Activated CD4-positive, alpha-beta memory T cell treated with anti-CD3 and anti-CD28 coated beads for 36 hours (primary cell): ENCODE measurements at regions of chr1 and their contacts with region 1.

Region 1: DNA sequence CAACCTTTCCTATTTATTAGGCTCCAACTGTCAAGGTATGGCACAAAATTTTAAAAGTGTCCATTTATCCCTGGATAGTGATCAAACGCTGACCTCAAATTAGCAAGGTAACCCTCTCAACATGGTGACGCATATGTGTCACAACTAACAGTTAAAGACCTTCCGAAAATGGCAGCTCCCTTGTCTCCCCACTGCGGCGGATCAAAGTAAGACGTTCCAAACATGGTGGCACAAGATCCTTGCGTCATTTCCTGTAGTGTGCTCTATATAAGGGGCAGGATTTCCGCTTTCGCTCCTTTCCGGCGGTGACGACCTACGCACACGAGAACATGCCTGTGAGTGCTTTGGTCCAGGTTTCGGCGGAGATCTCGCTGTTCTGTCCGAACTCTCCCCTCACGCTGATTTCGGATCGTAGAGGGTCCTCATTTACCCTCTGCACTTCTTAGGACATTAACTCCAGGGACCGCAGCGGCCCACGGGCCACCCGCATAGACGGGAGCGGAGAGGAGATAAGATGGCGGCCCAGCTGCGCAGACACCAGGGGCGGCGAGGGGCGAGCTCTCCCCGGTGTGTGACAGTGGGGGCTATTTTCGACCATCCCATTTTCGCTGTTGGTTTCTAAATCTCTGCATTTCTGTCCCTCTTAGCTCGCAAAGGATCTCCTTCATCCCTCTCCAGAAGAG is at the start of gene RPS27:
- DNase-seq: peak; percentile 93
- H3K4me3 Mint-ChIP-seq: peak within 1 kb of the TSS; percentile 97
- H3K27ac Mint-ChIP-seq: peak within 1 kb of the TSS; percentile 99
- H3K4me1 Mint-ChIP-seq: peaks cover 45% of the 10 kb centered on the region
- H3K27me3 Mint-ChIP-seq: peaks cover 3% of the 10 kb centered on the region
- total RNA-seq, gene RPS27: 1,861 to 1,992 TPM

Region 2: DNA sequence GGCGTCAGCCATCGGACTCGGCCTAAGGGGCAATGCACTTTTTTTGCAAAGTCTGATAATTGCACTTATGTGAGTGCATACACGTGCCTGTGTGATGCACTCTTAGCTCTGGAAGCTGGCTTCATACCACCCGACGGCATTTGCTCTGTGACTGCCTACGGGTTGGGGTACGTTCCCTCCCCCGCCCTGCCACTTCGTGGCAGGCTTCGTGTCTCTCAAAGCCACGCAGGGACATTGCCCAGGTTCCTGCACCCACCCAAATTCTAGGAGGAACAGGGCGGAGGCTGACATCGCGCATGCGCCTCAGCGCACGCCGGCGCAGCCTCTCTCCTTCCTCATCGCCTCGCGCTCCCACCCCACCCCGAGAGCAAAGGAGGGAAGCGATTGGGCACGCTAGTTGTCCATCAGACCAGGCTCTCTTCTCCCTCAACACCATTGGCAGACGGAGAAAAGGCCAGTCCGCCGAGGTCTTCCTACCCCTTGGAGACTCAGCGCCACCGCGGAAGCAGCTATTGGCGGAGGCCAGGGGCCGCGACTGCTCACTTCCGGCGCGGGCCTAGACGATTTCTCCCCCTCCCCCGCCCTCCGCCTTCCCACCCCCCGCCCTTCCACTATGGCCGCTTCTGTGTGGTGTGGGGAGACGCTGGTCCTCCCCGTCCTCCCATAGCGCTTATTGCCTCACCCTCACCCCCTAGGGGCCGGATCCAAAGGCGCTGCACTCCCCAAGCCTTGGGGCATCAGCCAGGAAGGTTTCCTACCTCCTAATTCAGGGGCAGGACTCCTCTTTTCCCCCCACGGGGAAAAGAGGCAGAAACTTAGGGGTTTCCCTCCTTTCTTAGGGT is 262.9 kb before region 1 on chr1 and contains the start of gene INTS3:
- CTCF ChIA-PET with region 1: no interaction called
- POLR2A ChIA-PET with region 1: interaction called, 3 read pairs
- intact Hi-C with region 1: loop called (anchors 1 kb)
- DNase-seq: peak; percentile 100
- H3K4me3 Mint-ChIP-seq: peak within 1 kb of the TSS; percentile 95
- H3K27ac Mint-ChIP-seq: peak within 1 kb of the TSS; percentile 97
- H3K4me1 Mint-ChIP-seq: peaks cover 39% of the 10 kb centered on the region
- H3K27me3 Mint-ChIP-seq: no peaks in the 10 kb centered on the region
- total RNA-seq, gene INTS3: 45.5 to 47.7 TPM

Region 3: GRCh38 chr1:153827168-153827964 is 163.2 kb before region 1 on chr1:
- CTCF ChIA-PET with region 1: interaction called, 10 read pairs
- POLR2A ChIA-PET with region 1: no interaction called
- intact Hi-C with region 1: no loop called
- DNase-seq: no peak
- H3K4me3 Mint-ChIP-seq: no peak overlapping the region
- H3K27ac Mint-ChIP-seq: no peak overlapping the region
- H3K4me1 Mint-ChIP-seq: no peaks in the 10 kb centered on the region
- H3K27me3 Mint-ChIP-seq: no peaks in the 10 kb centered on the region

Region 4: GRCh38 chr1:153958111-153958960 is 32.3 kb before region 1 on chr1 and contains the start of gene CRTC2:
- CTCF ChIA-PET with region 1: interaction called, 20 read pairs
- POLR2A ChIA-PET with region 1: interaction called, 10 read pairs
- intact Hi-C with region 1: loop called (anchors 1 kb)
- DNase-seq: peak; percentile 99
- H3K4me3 Mint-ChIP-seq: peak within 1 kb of the TSS; percentile 97
- H3K27ac Mint-ChIP-seq: peak within 1 kb of the TSS; percentile 96
- H3K4me1 Mint-ChIP-seq: peaks cover 51% of the 10 kb centered on the region
- H3K27me3 Mint-ChIP-seq: no peaks in the 10 kb centered on the region
- total RNA-seq, gene CRTC2: 60.8 to 78.0 TPM

Region 5: DNA sequence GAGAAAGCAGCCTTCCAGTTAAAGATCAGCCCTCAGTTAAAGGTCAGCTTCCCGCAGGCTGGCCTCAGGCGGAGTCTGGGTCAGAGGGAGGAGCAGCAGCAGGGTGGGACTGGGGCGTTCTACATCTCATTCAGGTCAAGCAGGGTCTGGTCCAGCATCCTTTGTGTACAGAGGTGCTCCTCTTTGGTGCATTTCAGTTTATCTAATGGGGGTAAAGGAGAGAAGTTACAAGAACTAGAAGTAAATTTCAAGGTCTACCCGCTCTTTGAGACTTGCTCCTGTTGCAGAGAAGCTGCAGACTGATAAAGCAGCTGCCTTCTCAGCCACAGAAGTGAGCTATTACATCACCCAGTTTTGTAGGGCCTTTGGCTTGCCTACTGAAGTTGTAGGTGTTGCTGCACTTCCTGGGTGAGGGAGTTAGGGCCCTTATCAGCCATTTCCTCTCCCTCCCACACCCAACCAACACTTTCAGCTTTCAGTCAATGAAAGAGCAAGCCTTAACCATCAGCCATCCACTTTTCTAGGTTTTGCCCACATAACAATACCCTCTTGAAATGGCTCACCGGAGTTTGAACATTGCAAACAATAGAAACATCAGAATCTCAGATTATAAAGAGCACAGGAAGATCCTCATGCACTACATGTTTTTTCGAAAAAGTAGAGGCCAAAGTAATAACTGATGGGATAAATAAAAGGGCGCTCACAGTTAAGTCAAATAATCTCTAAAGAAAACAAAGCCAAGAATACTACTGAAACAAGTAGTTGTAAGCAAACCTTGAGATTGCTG is 167.1 kb after region 1 on chr1:
- CTCF ChIA-PET with region 1: no interaction called
- POLR2A ChIA-PET with region 1: interaction called, 13 read pairs
- intact Hi-C with region 1: loop called (anchors 10 kb)
- DNase-seq: peak; percentile 83
- H3K4me3 Mint-ChIP-seq: peak overlapping the region; percentile 47
- H3K27ac Mint-ChIP-seq: peak overlapping the region; percentile 85
- H3K4me1 Mint-ChIP-seq: peaks cover 69% of the 10 kb centered on the region
- H3K27me3 Mint-ChIP-seq: no peaks in the 10 kb centered on the region

Region 6: GRCh38 chr1:154272217-154272998 is 281.8 kb after region 1 on chr1 and contains the start of gene HAX1:
- CTCF ChIA-PET with region 1: interaction called, 7 read pairs
- POLR2A ChIA-PET with region 1: no interaction called
- intact Hi-C with region 1: loop called (anchors 2 kb)
- DNase-seq: peak; percentile 99
- H3K4me3 Mint-ChIP-seq: peak within 1 kb of the TSS; percentile 99
- H3K27ac Mint-ChIP-seq: peak within 1 kb of the TSS; percentile 99
- H3K4me1 Mint-ChIP-seq: peaks cover 34% of the 10 kb centered on the region
- H3K27me3 Mint-ChIP-seq: no peaks in the 10 kb centered on the region
- total RNA-seq, gene HAX1: 168 to 169 TPM

Region 7: GRCh38 chr1:154324669-154325582 is 334.3 kb after region 1 on chr1 and contains the start of gene ATP8B2:
- CTCF ChIA-PET with region 1: no interaction called
- POLR2A ChIA-PET with region 1: no interaction called
- intact Hi-C with region 1: no loop called
- DNase-seq: peak; percentile 91
- H3K4me3 Mint-ChIP-seq: peak within 1 kb of the TSS; percentile 98
- H3K27ac Mint-ChIP-seq: peak within 1 kb of the TSS; percentile 94
- H3K4me1 Mint-ChIP-seq: peaks cover 36% of the 10 kb centered on the region
- H3K27me3 Mint-ChIP-seq: no peaks in the 10 kb centered on the region
- total RNA-seq, gene ATP8B2: 58.5 to 59.9 TPM